ENCODE measurements at regions of chr9 and their contacts with region 1.

Region 1: GRCh38 chr9:78035383-78035993 is 3.9 kb upstream of the GNAQ start:
- DNase-seq: no peak
- ATAC-seq: no peak
- H3K4me3 Mint-ChIP-seq: no peak overlapping the region
- H3K27ac Mint-ChIP-seq: no peak overlapping the region
- H3K4me1 Mint-ChIP-seq: peaks cover 17% of the 10 kb centered on the region
- H3K27me3 Mint-ChIP-seq: peaks cover 45% of the 10 kb centered on the region
- CTCF ChIP-seq: no peak

Region 2: GRCh38 chr9:77177161-77177893 is 858.2 kb before region 1 on chr9 and contains the start of gene VPS13A:
- CTCF ChIA-PET with region 1: no interaction called
- POLR2A ChIA-PET with region 1: no interaction called
- intact Hi-C with region 1: loop called (anchors 5 kb)
- DNase-seq: peak; percentile 92
- ATAC-seq: peak; percentile 82
- H3K4me3 Mint-ChIP-seq: peak within 1 kb of the TSS; percentile 92
- H3K27ac Mint-ChIP-seq: peak within 1 kb of the TSS; percentile 83
- H3K4me1 Mint-ChIP-seq: peaks cover 29% of the 10 kb centered on the region
- H3K27me3 Mint-ChIP-seq: no peaks in the 10 kb centered on the region
- CTCF ChIP-seq: no peak
- total RNA-seq, gene VPS13A: 58.0 and 69.8 TPM in 2 replicates

Region 3: DNA sequence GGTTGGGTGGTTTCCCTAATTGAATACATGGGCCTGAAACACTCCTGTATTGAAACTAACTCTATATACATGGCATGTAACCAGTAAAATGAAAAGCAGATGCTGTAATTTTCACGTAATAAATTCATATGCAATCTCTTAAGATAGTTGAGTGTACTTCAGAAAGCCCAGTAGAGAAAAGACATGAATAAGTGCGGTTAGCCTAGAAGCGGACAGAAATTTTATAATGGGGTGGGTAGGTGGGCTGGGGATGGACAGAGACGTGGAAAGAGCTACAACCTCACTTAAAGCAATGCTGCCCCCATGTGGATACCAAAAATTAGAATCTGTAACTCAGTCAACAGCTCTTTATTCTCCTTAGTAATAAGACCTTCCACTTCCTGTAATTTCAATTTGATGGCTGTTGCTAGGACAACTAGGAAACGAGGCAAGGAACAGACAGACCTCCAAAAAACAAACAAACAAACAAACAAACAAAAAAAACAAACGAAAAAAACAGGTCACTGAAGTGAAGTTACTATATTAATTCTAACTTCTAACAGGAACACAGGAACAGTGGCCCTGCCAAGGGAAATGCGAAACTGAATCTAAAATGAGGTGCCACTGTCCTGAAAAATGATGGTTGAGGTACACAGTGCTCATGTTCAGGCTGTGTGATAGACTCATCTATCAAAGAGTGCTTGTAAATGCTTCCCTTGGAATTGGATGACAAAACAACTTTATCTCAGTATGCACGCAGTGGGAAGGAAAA is 284.0 kb before region 1 on chr9:
- CTCF ChIA-PET with region 1: no interaction called
- POLR2A ChIA-PET with region 1: no interaction called
- intact Hi-C with region 1: loop called (anchors 10 kb)
- DNase-seq: no peak
- ATAC-seq: no peak
- H3K4me3 Mint-ChIP-seq: no peak overlapping the region
- H3K27ac Mint-ChIP-seq: no peak overlapping the region
- H3K4me1 Mint-ChIP-seq: no peaks in the 10 kb centered on the region
- H3K27me3 Mint-ChIP-seq: no peaks in the 10 kb centered on the region
- CTCF ChIP-seq: no peak

Region 4: GRCh38 chr9:77769246-77769645 is 266.2 kb before region 1 on chr9:
- CTCF ChIA-PET with region 1: no interaction called
- POLR2A ChIA-PET with region 1: no interaction called
- intact Hi-C with region 1: no loop called
- DNase-seq: no peak
- ATAC-seq: no peak
- H3K4me3 Mint-ChIP-seq: no peak overlapping the region
- H3K27ac Mint-ChIP-seq: no peak overlapping the region
- H3K4me1 Mint-ChIP-seq: no peaks in the 10 kb centered on the region
- H3K27me3 Mint-ChIP-seq: peaks cover 8% of the 10 kb centered on the region
- CTCF ChIP-seq: no peak